A549 (cell line): ENCODE measurements at regions of chr11 and their contacts with region 1.

Region 1: GRCh38 chr11:44775366-44775984 is 48.7 kb downstream of the TSPAN18 start:
- DNase-seq: peak; percentile 78 to 80
- ATAC-seq: peak; percentile 90 to 99
- H3K4me3 ChIP-seq: no peak overlapping the region
- H3K27ac ChIP-seq: no peak overlapping the region
- H3K4me1 ChIP-seq: no peaks in the 10 kb centered on the region
- CTCF ChIP-seq: peak; percentile 70
- EP300 ChIP-seq: no peak
- POLR2A ChIP-seq: no peak
- RAD21 ChIP-seq: peak; percentile 56 to 57

Region 2: GRCh38 chr11:44568658-44569473 is 206.6 kb before region 1 on chr11:
- CTCF ChIA-PET with region 1: no interaction called
- POLR2A ChIA-PET with region 1: no interaction called
- DNase-seq: peak; percentile 43 to 75
- ATAC-seq: peak; percentile 20 to 25; a peak in 5 of 6 replicates
- H3K4me3 ChIP-seq: no peak overlapping the region
- H3K27ac ChIP-seq: peak overlapping the region; percentile 5 to 72; a peak in 4 of 6 replicates
- H3K4me1 ChIP-seq: peaks cover 19% of the 10 kb centered on the region
- CTCF ChIP-seq: no peak
- EP300 ChIP-seq: no peak
- POLR2A ChIP-seq: no peak
- RAD21 ChIP-seq: no peak

Region 3: GRCh38 chr11:44621140-44621681 is 154.3 kb before region 1 on chr11:
- CTCF ChIA-PET with region 1: interaction called, 25 read pairs
- POLR2A ChIA-PET with region 1: no interaction called
- DNase-seq: peak; percentile 75 to 82
- ATAC-seq: peak; percentile 72 to 93
- H3K4me3 ChIP-seq: peak overlapping the region; percentile 38
- H3K27ac ChIP-seq: peak overlapping the region; percentile 67 to 69
- H3K4me1 ChIP-seq: no peaks in the 10 kb centered on the region
- CTCF ChIP-seq: peak; percentile 96
- EP300 ChIP-seq: no peak
- POLR2A ChIP-seq: no peak
- RAD21 ChIP-seq: peak; percentile 95 to 99

Region 4: DNA sequence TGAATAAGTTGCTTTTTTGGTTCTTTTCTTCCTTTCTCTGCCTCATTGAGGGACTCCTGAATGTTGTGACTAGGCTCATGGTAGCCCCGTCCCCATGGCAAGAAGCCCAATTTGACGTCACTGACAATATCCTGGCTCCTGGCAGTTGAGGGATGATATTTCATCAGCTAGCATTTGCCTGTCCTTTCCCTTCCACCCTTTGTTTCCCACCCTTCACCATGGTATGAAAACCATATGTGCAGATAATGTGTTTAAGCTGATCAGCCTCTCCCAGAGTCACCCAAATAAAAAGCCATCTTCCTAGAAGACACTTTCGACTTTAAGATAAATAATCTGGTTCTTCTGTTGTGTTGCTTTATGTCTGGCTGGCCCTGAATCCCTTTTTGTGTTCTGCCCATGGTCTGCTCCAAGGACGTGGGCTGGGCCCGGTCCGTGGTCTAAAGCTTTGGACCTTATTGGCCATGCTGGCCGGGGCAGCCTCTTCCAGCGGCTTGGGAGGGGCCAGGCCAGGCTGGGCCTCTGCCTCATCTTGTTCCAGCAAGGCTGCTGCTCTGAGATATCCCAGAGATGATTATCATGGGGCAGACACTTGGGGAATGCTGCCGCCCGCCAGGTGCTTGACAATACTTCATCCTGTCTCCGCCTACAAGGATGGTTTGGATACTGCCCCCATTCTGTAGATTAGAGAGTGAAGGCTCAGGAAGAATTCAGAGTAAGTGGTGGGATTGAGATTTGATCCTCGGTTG is 43.6 kb before region 1 on chr11:
- CTCF ChIA-PET with region 1: interaction called, 19 read pairs
- POLR2A ChIA-PET with region 1: no interaction called
- DNase-seq: no peak
- ATAC-seq: no peak
- H3K4me3 ChIP-seq: no peak overlapping the region
- H3K27ac ChIP-seq: 0 out of 6 replicates have a peak overlapping the region, but pooled peaks of 1 of the 2 experiments have one; percentile 18
- H3K4me1 ChIP-seq: peaks cover 7% of the 10 kb centered on the region; the same call in 1 of the 3 replicates
- CTCF ChIP-seq: no peak
- EP300 ChIP-seq: no peak
- POLR2A ChIP-seq: no peak
- RAD21 ChIP-seq: no peak

Region 5: DNA sequence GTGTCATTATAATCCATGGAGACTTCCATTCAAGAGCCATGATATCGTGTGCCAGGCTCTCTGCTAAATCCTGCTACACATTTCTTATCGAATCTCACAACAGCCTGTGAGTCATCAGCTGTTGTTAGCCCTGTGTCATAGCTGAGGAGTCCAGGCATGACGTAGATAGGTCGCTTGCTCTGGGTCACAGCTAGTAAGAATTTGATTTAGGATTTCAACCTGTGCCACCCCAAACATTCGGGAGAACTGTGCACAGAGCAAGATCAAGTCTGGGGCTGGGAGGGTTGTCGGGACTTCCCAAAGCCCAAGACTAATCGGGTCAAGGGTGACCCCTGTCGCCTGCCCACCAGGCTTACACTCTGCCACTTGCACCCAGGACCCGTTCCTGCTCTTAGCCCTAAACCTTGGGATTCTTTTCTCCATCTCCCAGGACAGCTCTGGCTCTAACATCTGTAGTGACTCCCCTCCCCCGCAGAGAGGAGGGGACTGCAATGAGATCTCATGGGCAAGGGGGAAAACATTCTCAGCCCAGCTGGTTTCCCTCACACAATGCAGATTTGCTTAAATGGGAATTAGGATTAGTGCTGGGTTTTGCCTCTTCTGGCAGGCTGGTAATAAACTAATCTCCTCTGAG is 14.4 kb before region 1 on chr11:
- CTCF ChIA-PET with region 1: interaction called, 40 read pairs
- POLR2A ChIA-PET with region 1: no interaction called
- DNase-seq: peak; percentile 70 to 71
- ATAC-seq: peak; percentile 95 to 97
- H3K4me3 ChIP-seq: no peak overlapping the region
- H3K27ac ChIP-seq: peak overlapping the region in 1 of 2 experiments; percentile 64; a peak in 3 of 6 replicates
- H3K4me1 ChIP-seq: peaks cover 24% of the 10 kb centered on the region
- CTCF ChIP-seq: no peak
- EP300 ChIP-seq: no peak
- POLR2A ChIP-seq: no peak
- RAD21 ChIP-seq: no peak

Region 6: GRCh38 chr11:44799012-44799411 is 23.5 kb after region 1 on chr11:
- CTCF ChIA-PET with region 1: interaction called, 37 read pairs
- POLR2A ChIA-PET with region 1: no interaction called
- DNase-seq: no peak
- ATAC-seq: no peak
- H3K4me3 ChIP-seq: no peak overlapping the region
- H3K27ac ChIP-seq: no peak overlapping the region
- H3K4me1 ChIP-seq: no peaks in the 10 kb centered on the region
- CTCF ChIP-seq: no peak
- EP300 ChIP-seq: no peak
- POLR2A ChIP-seq: no peak
- RAD21 ChIP-seq: no peak

Region 7: GRCh38 chr11:44911029-44911814 is 135.7 kb after region 1 on chr11:
- CTCF ChIA-PET with region 1: interaction called, 21 read pairs
- POLR2A ChIA-PET with region 1: no interaction called
- DNase-seq: peak; percentile 82 to 88
- ATAC-seq: peak; percentile 75 to 97
- H3K4me3 ChIP-seq: no peak overlapping the region
- H3K27ac ChIP-seq: no peak overlapping the region
- H3K4me1 ChIP-seq: no peaks in the 10 kb centered on the region
- CTCF ChIP-seq: peak; percentile 87
- EP300 ChIP-seq: no peak
- POLR2A ChIP-seq: no peak
- RAD21 ChIP-seq: peak; percentile 83 to 88